HepG2 (cell line): ENCODE measurements at regions of chr20 and their contacts with region 1.

Region 1: GRCh38 chr20:34334654-34335407 is 28.2 kb upstream of the ITCH start:
- DNase-seq: peak; percentile 83
- ATAC-seq: peak; percentile 50
- H3K4me3 ChIP-seq: peak overlapping the region in 2 of 3 experiments; percentile 3 to 53; a peak in 2 of 6 replicates
- H3K27ac ChIP-seq: peak overlapping the region; percentile 59
- H3K4me1 ChIP-seq: peaks cover 70% of the 10 kb centered on the region
- H3K27me3 ChIP-seq: no peaks in the 10 kb centered on the region
- CTCF ChIP-seq: no peak; the same call in 1 of the 2 replicates
- EP300 ChIP-seq: peak in 1 of 2 experiments; percentile 54; a peak in 2 of 4 replicates
- POLR2A ChIP-seq: no peak
- RAD21 ChIP-seq: no peak

Region 2: GRCh38 chr20:34215711-34216381 is 119.0 kb before region 1 on chr20:
- CTCF ChIA-PET with region 1: no interaction called
- POLR2A ChIA-PET with region 1: no interaction called
- in situ Hi-C with region 1: no loop called
- intact Hi-C with region 1: no loop called
- DNase-seq: peak; percentile 79
- ATAC-seq: peak; percentile 98
- H3K4me3 ChIP-seq: peak overlapping the region; percentile 47 to 74 (median 62)
- H3K27ac ChIP-seq: no peak overlapping the region
- H3K4me1 ChIP-seq: peaks cover 18% of the 10 kb centered on the region
- H3K27me3 ChIP-seq: peaks cover 0 to 65% of the 10 kb centered on the region in 2 experiments; a peak in 3 of 5 replicates
- CTCF ChIP-seq: peak; percentile 54
- EP300 ChIP-seq: no peak
- POLR2A ChIP-seq: no peak
- RAD21 ChIP-seq: peak; percentile 61

Region 3: GRCh38 chr20:34249291-34249690 is 85.5 kb before region 1 on chr20:
- CTCF ChIA-PET with region 1: no interaction called
- POLR2A ChIA-PET with region 1: no interaction called
- in situ Hi-C with region 1: no loop called
- intact Hi-C with region 1: no loop called
- DNase-seq: no peak
- ATAC-seq: no peak; the same call in 2 of the 3 replicates
- H3K4me3 ChIP-seq: no peak overlapping the region
- H3K27ac ChIP-seq: no peak overlapping the region
- H3K4me1 ChIP-seq: peaks cover 3% of the 10 kb centered on the region
- H3K27me3 ChIP-seq: no peaks in the 10 kb centered on the region
- CTCF ChIP-seq: no peak
- EP300 ChIP-seq: no peak
- POLR2A ChIP-seq: no peak
- RAD21 ChIP-seq: no peak

Region 4: GRCh38 chr20:34302723-34303528 is 31.9 kb before region 1 on chr20 and contains the start of gene AHCY:
- CTCF ChIA-PET with region 1: no interaction called
- POLR2A ChIA-PET with region 1: interaction called, 15 read pairs
- in situ Hi-C with region 1: no loop called
- intact Hi-C with region 1: no loop called
- DNase-seq: peak; percentile 97
- ATAC-seq: peak; percentile 90
- H3K4me3 ChIP-seq: peak within 1 kb of the TSS; percentile 80 to 92 (median 90)
- H3K27ac ChIP-seq: peak within 1 kb of the TSS; percentile 83
- H3K4me1 ChIP-seq: peaks cover 71% of the 10 kb centered on the region
- H3K27me3 ChIP-seq: no peaks in the 10 kb centered on the region; a peak in 1 of 5 replicates
- CTCF ChIP-seq: no peak
- EP300 ChIP-seq: no peak; a peak in 1 of 4 replicates
- POLR2A ChIP-seq: peak; percentile 95 to 96
- RAD21 ChIP-seq: peak; percentile 67
- total RNA-seq, gene AHCY: 407 and 447 TPM in 2 replicates

Region 5: GRCh38 chr20:34403908-34404307 is 69.1 kb after region 1 on chr20:
- CTCF ChIA-PET with region 1: no interaction called
- POLR2A ChIA-PET with region 1: interaction called, 3 read pairs
- in situ Hi-C with region 1: no loop called
- intact Hi-C with region 1: loop called (anchors 5 kb)
- DNase-seq: no peak
- ATAC-seq: no peak
- H3K4me3 ChIP-seq: no peak overlapping the region
- H3K27ac ChIP-seq: peak overlapping the region; percentile 54
- H3K4me1 ChIP-seq: peaks cover 95% of the 10 kb centered on the region
- H3K27me3 ChIP-seq: no peaks in the 10 kb centered on the region
- CTCF ChIP-seq: no peak
- EP300 ChIP-seq: no peak
- POLR2A ChIP-seq: no peak
- RAD21 ChIP-seq: no peak

Region 6: GRCh38 chr20:34570859-34571306 is 236.1 kb after region 1 on chr20:
- CTCF ChIA-PET with region 1: no interaction called
- POLR2A ChIA-PET with region 1: no interaction called
- in situ Hi-C with region 1: no loop called
- intact Hi-C with region 1: no loop called
- DNase-seq: no peak
- ATAC-seq: no peak
- H3K4me3 ChIP-seq: no peak overlapping the region
- H3K27ac ChIP-seq: no peak overlapping the region
- H3K4me1 ChIP-seq: peaks cover 7% of the 10 kb centered on the region; the same call in 1 of the 2 replicates
- H3K27me3 ChIP-seq: no peaks in the 10 kb centered on the region
- CTCF ChIP-seq: no peak
- EP300 ChIP-seq: no peak
- POLR2A ChIP-seq: no peak
- RAD21 ChIP-seq: no peak